Esophagus muscularis mucosa (tissue), 4 donors: ENCODE measurements at regions of chr6 and their contacts with region 1.

Region 1: DNA sequence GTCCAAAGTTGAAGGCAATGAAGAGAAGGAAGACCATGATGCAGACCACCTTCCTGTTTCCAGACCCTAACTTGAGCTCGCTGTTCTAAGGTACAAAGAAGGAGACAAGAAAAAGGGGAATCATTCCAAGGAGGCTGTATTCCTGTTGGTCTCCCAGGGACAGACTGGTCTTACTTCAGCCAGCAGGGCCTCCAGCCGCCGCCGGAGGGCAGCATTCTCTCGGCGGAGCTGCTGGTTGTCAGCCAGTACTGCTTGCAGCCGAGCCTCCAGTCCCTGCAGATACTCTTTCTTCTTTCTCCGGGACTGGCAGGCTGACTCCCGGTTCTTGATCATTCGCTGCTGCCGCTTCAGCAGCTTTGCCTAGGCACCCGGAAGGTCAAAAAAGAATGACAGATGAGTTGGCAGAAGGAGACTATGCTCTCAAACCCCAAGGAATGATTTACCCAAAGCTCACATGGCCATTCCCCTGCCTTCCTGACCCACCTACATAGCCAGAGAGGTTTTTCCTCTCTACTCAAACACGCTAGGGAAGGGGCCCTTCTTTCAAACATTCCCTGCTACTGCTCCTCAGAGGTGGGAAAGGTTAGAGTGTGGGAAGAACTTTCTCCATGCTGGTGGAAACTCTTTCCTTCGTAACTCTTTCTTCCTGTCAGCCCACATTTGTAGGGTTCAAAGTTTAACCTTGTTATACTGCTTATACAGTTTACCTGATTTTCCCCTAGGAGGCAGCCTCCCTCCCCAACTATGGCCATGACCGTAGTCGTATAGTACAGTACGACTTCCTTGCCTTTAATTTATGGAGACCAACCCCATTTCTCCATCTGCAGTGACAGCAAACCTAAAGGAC is 9.0 kb downstream of the ATF6B start:
- DNase-seq: no peak
- H3K4me3 ChIP-seq: no peak overlapping the region
- H3K27ac ChIP-seq: peak overlapping the region; percentile 52 to 68 (median 64)
- H3K4me1 ChIP-seq: peaks cover 21 to 35% (median 28%) of the 10 kb centered on the region in 4 donors
- H3K27me3 ChIP-seq: no peaks in the 10 kb centered on the region
- CTCF ChIP-seq: peak; percentile 96 to 97 (median 96)
- EP300 ChIP-seq: no peak
- POLR2A ChIP-seq: no peak

Region 2: GRCh38 chr6:32153564-32154513 is 34.8 kb after region 1 on chr6 and contains the start of gene PPT2:
- intact Hi-C with region 1: loop called (anchors 2 kb)
- DNase-seq: peak; percentile 98
- H3K4me3 ChIP-seq: peak within 1 kb of the TSS; percentile 76 to 84 (median 80)
- H3K27ac ChIP-seq: peak within 1 kb of the TSS; percentile 90 to 94 (median 93)
- H3K4me1 ChIP-seq: peaks cover 36 to 73% (median 63%) of the 10 kb centered on the region in 4 donors
- H3K27me3 ChIP-seq: no peaks in the 10 kb centered on the region
- CTCF ChIP-seq: peak in 2 of 3 experiments; percentile 27 to 30
- EP300 ChIP-seq: no peak
- POLR2A ChIP-seq: peak; percentile 36
- total RNA-seq, gene PPT2: 14.9 to 31.4 (median 20.8) TPM